ENCODE measurements at regions of chr3 and their contacts with region 1.

Region 1: GRCh38 chr3:170307671-170308403 is 49.7 kb upstream of the SKIL start:
- DNase-seq: no peak
- H3K4me3 ChIP-seq: no peak overlapping the region
- H3K27ac ChIP-seq: no peak overlapping the region
- H3K4me1 ChIP-seq: no peaks in the 10 kb centered on the region
- CTCF ChIP-seq: no peak

Region 2: GRCh38 chr3:169863458-169863899 is 444.4 kb before region 1 on chr3:
- CTCF ChIA-PET with region 1: no interaction called
- POLR2A ChIA-PET with region 1: no interaction called
- intact Hi-C with region 1: loop called (anchors 10 kb)
- DNase-seq: peak; percentile 85
- H3K4me3 ChIP-seq: no peak overlapping the region
- H3K27ac ChIP-seq: no peak overlapping the region
- H3K4me1 ChIP-seq: peaks cover 33% of the 10 kb centered on the region
- CTCF ChIP-seq: peak; percentile 99

Region 3: DNA sequence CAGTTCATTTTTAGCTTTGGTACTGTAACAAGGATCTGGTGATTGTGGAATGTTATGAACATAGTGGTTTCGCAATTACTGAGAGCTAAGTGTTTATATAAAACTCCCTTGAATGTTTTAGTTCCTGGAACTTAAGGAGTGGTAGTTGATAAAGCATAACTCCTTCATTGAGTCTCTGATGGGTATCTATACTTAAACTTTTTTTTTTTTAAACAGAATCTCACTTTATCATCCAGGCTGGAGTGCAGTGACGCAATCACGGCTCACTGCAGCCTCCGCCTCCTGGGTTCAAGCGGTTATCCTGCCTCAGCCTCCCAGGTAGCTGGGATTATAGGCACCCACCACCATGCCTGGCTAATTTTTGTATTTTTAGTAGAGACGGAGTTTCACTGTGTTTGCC is 74.3 kb before region 1 on chr3:
- CTCF ChIA-PET with region 1: no interaction called
- POLR2A ChIA-PET with region 1: no interaction called
- intact Hi-C with region 1: no loop called
- DNase-seq: no peak
- H3K4me3 ChIP-seq: no peak overlapping the region
- H3K27ac ChIP-seq: no peak overlapping the region
- H3K4me1 ChIP-seq: peaks cover 12% of the 10 kb centered on the region
- CTCF ChIP-seq: no peak

Region 4: GRCh38 chr3:170350515-170351413 is 42.9 kb after region 1 on chr3:
- CTCF ChIA-PET with region 1: no interaction called
- POLR2A ChIA-PET with region 1: no interaction called
- intact Hi-C with region 1: loop called (anchors 2 kb)
- DNase-seq: peak; percentile 64
- H3K4me3 ChIP-seq: peak overlapping the region; percentile 63
- H3K27ac ChIP-seq: peak overlapping the region; percentile 78
- H3K4me1 ChIP-seq: peaks cover 68% of the 10 kb centered on the region
- CTCF ChIP-seq: no peak

Region 5: DNA sequence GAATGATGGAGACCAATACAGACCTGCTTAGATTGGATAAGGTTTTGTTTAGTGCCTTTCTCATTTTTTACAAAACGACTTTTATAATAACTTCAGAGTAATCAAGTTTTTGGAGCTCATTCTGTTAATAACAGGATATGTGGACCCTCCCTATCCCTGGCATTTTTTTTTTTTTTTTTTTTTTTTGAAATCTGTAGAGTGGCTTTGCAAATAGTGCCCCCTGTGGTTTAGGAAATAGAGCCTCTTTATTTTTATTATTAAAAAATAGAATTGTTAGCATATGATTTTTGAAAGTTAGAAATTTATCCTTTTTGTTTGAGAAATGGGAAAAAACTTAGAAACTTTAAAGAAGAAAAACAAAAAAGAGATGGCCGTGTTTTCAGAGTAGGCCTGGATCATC is 61.1 kb after region 1 on chr3:
- CTCF ChIA-PET with region 1: no interaction called
- POLR2A ChIA-PET with region 1: interaction called, 3 read pairs
- intact Hi-C with region 1: loop called (anchors 1 kb)
- DNase-seq: no peak
- H3K4me3 ChIP-seq: peak overlapping the region; percentile 69
- H3K27ac ChIP-seq: peak overlapping the region; percentile 80
- H3K4me1 ChIP-seq: peaks cover 81% of the 10 kb centered on the region
- CTCF ChIP-seq: peak; percentile 86

Region 6: DNA sequence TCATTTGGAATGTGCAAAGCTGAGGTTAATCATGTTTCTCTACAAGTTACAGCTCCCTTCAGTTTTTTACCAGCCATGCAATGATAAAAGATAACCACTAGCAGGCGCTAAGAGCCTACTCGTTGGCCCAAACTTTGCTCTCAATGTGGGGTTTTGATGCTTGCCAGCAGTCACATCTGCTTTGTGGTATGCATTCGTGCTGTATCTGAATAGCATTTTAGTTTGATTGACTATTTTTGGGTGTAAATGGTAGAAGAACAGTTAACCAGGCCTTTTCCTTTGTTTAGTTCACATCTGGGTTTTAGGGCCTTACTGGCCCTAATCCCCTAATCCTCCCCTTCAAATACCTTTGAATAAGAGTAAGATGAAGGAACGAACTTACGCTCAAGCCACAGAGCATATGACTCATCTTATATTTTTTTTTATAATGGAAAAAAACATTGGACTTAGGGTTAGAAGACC is 106.4 kb after region 1 on chr3:
- CTCF ChIA-PET with region 1: interaction called, 4 read pairs
- POLR2A ChIA-PET with region 1: interaction called, 4 read pairs
- intact Hi-C with region 1: loop called (anchors 1 kb)
- DNase-seq: peak; percentile 73
- H3K4me3 ChIP-seq: no peak overlapping the region
- H3K27ac ChIP-seq: no peak overlapping the region
- H3K4me1 ChIP-seq: no peaks in the 10 kb centered on the region
- CTCF ChIP-seq: peak; percentile 99

Region 7: DNA sequence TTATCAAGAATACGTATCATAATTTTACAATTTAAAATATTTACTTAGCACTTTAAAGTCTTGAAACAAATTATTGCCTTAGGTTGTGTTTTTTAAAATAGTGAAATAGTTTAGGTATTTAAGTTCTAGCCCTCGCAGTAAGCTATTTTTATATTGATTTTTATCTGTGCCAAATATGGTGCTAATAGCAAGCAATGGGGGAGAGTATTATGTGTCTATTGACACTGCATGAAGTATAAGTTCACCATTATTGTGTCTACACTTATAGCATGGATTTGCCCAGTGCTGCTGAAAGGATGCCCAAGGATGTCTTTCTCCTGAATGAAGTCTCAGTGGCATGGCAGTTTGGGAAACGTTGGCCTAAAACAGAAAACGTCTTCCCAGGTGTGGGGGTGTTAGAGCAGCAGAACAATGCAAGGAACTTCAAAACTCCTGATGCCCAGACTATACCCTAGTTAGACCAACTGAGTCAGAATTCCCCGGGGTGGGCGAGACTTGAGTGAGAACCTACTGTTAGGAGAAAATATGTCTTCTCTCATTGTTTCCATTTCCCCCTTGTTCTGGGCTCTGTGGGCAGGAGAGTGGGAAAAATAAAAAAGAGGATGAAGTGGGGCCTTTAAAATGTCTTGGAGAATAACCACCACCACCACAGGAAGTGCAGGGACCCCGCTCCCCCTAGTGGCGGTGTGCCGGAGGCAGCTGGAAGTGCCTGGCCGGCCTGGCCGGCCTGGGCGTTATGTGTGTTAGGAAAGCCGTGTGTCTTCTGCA is 382.2 kb after region 1 on chr3:
- CTCF ChIA-PET with region 1: no interaction called
- POLR2A ChIA-PET with region 1: no interaction called
- intact Hi-C with region 1: loop called (anchors 5 kb)
- DNase-seq: peak; percentile 52
- H3K4me3 ChIP-seq: no peak overlapping the region
- H3K27ac ChIP-seq: no peak overlapping the region
- H3K4me1 ChIP-seq: no peaks in the 10 kb centered on the region
- CTCF ChIP-seq: peak; percentile 82

Region 8: DNA sequence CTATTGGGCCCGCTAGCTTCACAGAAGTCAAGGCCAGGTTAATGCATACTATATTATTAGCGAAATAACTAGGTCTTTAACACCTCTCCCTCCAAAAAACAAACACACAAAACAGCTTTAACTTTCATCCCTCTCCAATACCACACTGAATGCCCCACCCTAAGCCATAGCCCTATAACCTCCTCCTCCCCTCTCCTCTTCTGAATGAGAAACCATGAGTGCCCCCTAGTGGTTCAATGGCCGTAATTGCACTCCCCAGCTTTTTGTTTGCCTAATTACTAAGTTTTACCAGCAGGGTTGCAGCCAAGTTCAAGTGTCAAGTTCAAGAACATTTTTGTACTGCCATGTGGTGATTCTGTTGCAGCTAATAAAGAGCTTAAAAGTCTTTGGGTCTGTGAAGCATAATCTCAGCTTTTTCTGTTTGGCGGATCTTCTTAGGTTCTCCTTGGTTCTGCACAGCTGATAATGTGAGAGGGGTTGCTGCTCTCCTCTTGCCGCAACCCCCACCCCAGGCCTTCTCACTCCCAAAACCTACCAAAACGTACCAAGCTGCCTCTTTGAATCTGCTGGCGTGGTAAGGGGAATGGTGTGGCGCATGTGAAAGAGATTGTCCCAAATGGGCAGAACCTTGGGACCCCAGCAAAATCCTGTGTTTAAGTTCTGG is 504.2 kb after region 1 on chr3:
- CTCF ChIA-PET with region 1: no interaction called
- POLR2A ChIA-PET with region 1: no interaction called
- intact Hi-C with region 1: loop called (anchors 1 kb)
- DNase-seq: peak; percentile 77
- H3K4me3 ChIP-seq: no peak overlapping the region
- H3K27ac ChIP-seq: no peak overlapping the region
- H3K4me1 ChIP-seq: no peaks in the 10 kb centered on the region
- CTCF ChIP-seq: peak; percentile 96